Mammary epithelial cell (primary cell): ENCODE measurements at regions of chr1 and their contacts with region 1.

Region 1: GRCh38 chr1:209601809-209602657 is 18.5 kb downstream of the CAMK1G start:
- DNase-seq: peak; percentile 61
- H3K4me3 ChIP-seq: no peak overlapping the region
- H3K27ac ChIP-seq: no peak overlapping the region
- H3K4me1 ChIP-seq: peaks cover 1% of the 10 kb centered on the region
- H3K27me3 ChIP-seq: no peaks in the 10 kb centered on the region
- CTCF ChIP-seq: peak; percentile 80 to 93

Region 2: DNA sequence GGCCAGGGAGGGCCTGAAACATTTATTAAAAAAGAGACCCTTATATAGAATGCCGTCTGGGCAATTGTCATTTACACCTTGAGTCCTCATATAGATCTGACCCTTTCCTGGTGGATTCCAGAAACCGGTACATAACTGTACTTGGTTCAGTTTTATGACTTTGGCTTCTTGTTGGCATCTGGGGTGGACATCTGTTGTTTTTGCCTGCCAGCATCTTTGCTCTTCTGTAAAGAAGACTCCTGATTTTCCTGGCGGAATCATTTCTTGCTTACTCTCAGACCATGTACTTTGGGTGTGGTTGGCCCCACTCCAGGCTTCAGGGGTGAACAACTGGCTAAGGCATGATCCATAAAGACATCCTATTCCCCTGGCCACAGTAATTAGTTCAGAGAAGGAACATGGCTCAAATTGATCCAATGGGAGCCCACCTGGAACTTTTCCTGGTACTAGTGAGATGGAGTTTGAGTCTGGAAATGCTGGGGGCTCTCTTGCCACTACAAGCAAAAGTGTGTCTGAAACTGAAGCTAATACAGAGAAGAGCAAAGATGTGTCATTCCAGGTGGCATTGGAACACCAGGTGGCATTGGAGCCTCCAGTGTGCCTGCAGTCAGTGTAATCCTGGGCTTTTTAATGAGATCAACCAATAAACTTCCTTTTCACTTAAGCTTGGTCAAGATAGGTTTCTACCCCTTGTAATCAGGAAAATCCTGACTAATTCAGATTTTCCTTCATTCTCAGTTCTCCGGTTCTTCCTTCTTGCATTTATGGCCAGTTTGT is 351.0 kb before region 1 on chr1:
- CTCF ChIA-PET with region 1: no interaction called
- dilution Hi-C with region 1: no loop called
- in situ Hi-C with region 1: no loop called
- intact Hi-C with region 1: no loop called
- DNase-seq: no peak
- H3K4me3 ChIP-seq: no peak overlapping the region
- H3K27ac ChIP-seq: no peak overlapping the region
- H3K4me1 ChIP-seq: peaks cover 13% of the 10 kb centered on the region
- H3K27me3 ChIP-seq: no peaks in the 10 kb centered on the region
- CTCF ChIP-seq: peak in 1 of 2 donors; percentile 52

Region 3: GRCh38 chr1:209576798-209577197 is 25.2 kb before region 1 on chr1:
- CTCF ChIA-PET with region 1: interaction called, 4 read pairs
- dilution Hi-C with region 1: no loop called
- in situ Hi-C with region 1: no loop called
- intact Hi-C with region 1: loop called (anchors 1 kb)
- DNase-seq: peak; percentile 76
- H3K4me3 ChIP-seq: no peak overlapping the region
- H3K27ac ChIP-seq: no peak overlapping the region
- H3K4me1 ChIP-seq: peaks cover 9% of the 10 kb centered on the region
- H3K27me3 ChIP-seq: no peaks in the 10 kb centered on the region
- CTCF ChIP-seq: peak; percentile 98

Region 4: GRCh38 chr1:209617755-209618154 is 15.7 kb after region 1 on chr1:
- CTCF ChIA-PET with region 1: no interaction called
- dilution Hi-C with region 1: no loop called
- in situ Hi-C with region 1: no loop called
- intact Hi-C with region 1: no loop called
- DNase-seq: no peak
- H3K4me3 ChIP-seq: no peak overlapping the region
- H3K27ac ChIP-seq: no peak overlapping the region
- H3K4me1 ChIP-seq: no peaks in the 10 kb centered on the region
- H3K27me3 ChIP-seq: no peaks in the 10 kb centered on the region
- CTCF ChIP-seq: no peak

Region 5: GRCh38 chr1:209627732-209628196 is 25.7 kb after region 1 on chr1:
- CTCF ChIA-PET with region 1: no interaction called
- dilution Hi-C with region 1: no loop called
- in situ Hi-C with region 1: no loop called
- intact Hi-C with region 1: loop called (anchors 1 kb)
- DNase-seq: no peak
- H3K4me3 ChIP-seq: no peak overlapping the region
- H3K27ac ChIP-seq: no peak overlapping the region
- H3K4me1 ChIP-seq: peaks cover 4% of the 10 kb centered on the region
- H3K27me3 ChIP-seq: no peaks in the 10 kb centered on the region
- CTCF ChIP-seq: peak; percentile 86 to 90

Region 6: GRCh38 chr1:209747580-209748262 is 145.7 kb after region 1 on chr1:
- CTCF ChIA-PET with region 1: no interaction called
- dilution Hi-C with region 1: no loop called
- in situ Hi-C with region 1: no loop called
- intact Hi-C with region 1: loop called (anchors 1 kb)
- DNase-seq: peak; percentile 97
- H3K4me3 ChIP-seq: no peak overlapping the region
- H3K27ac ChIP-seq: no peak overlapping the region
- H3K4me1 ChIP-seq: peaks cover 7% of the 10 kb centered on the region
- H3K27me3 ChIP-seq: no peaks in the 10 kb centered on the region
- CTCF ChIP-seq: peak; percentile 69 to 74